Mammary epithelial cell (primary cell): ENCODE measurements at regions of chr18 and their contacts with region 1.

Region 1: GRCh38 chr18:72846736-72847533 is 20.9 kb downstream of the NETO1 start:
- DNase-seq: peak; percentile 78
- H3K4me3 ChIP-seq: no peak overlapping the region
- H3K27ac ChIP-seq: peak overlapping the region; percentile 70
- H3K4me1 ChIP-seq: peaks cover 35% of the 10 kb centered on the region
- H3K27me3 ChIP-seq: no peaks in the 10 kb centered on the region
- CTCF ChIP-seq: no peak

Region 2: DNA sequence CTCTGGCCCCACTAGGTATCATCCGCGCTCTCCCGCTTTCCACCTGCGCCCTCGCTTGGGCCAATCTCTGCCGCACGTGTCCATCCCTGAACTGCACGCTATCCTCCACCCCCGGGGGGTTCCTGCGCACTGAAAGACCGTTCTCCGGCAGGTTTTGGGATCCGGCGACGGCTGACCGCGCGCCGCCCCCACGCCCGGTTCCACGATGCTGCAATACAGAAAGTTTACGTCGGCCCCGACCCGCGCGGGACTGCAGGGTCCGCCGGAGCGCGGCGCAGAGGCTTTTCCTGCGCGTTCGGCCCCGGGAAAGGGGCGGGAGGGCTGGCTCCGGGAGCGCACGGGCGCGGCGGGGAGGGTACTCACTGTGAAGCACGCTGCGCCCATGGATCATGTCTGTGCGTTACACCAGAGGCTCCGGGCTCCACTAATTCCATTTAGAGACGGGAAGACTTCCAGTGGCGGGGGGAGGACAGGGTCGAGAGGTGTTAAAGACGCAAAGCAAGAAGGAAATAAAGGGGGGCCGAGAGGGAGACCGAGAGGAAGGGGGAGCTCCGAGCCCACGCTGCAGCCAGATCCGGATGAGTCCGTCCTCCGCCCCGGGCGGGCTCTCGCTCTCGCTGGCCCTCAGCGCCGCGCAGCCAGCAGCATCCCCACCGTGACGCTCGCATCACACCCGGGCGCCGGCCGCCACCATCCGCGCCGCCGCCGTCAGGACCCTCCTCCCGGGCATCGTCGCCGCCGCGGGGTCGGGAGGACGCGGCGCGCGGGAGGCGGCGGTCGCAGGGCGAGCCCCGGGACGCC is 20.2 kb after region 1 on chr18:
- CTCF ChIA-PET with region 1: no interaction called
- dilution Hi-C with region 1: no loop called
- in situ Hi-C with region 1: no loop called
- intact Hi-C with region 1: loop called (anchors 2 kb)
- DNase-seq: peak; percentile 41
- H3K4me3 ChIP-seq: peak overlapping the region; percentile 32 to 44 (median 42)
- H3K27ac ChIP-seq: no peak overlapping the region
- H3K4me1 ChIP-seq: peaks cover 23% of the 10 kb centered on the region
- H3K27me3 ChIP-seq: peaks cover 37% of the 10 kb centered on the region
- CTCF ChIP-seq: no peak

Region 3: GRCh38 chr18:73007195-73007914 is 160.4 kb after region 1 on chr18:
- CTCF ChIA-PET with region 1: no interaction called
- dilution Hi-C with region 1: no loop called
- in situ Hi-C with region 1: no loop called
- intact Hi-C with region 1: loop called (anchors 10 kb)
- DNase-seq: peak; percentile 89
- H3K4me3 ChIP-seq: no peak overlapping the region
- H3K27ac ChIP-seq: peak overlapping the region; percentile 46
- H3K4me1 ChIP-seq: peaks cover 17% of the 10 kb centered on the region
- H3K27me3 ChIP-seq: no peaks in the 10 kb centered on the region
- CTCF ChIP-seq: no peak